ENCODE measurements at regions of chr2 and their contacts with region 1.

Region 1: GRCh38 chr2:222797261-222797660 is 63.6 kb upstream of the ACSL3 start:
- DNase-seq: no peak
- H3K4me3 Mint-ChIP-seq: no peak overlapping the region
- H3K27ac Mint-ChIP-seq: no peak overlapping the region
- H3K4me1 Mint-ChIP-seq: peaks cover 2% of the 10 kb centered on the region
- H3K27me3 Mint-ChIP-seq: peaks cover 4% of the 10 kb centered on the region

Region 2: DNA sequence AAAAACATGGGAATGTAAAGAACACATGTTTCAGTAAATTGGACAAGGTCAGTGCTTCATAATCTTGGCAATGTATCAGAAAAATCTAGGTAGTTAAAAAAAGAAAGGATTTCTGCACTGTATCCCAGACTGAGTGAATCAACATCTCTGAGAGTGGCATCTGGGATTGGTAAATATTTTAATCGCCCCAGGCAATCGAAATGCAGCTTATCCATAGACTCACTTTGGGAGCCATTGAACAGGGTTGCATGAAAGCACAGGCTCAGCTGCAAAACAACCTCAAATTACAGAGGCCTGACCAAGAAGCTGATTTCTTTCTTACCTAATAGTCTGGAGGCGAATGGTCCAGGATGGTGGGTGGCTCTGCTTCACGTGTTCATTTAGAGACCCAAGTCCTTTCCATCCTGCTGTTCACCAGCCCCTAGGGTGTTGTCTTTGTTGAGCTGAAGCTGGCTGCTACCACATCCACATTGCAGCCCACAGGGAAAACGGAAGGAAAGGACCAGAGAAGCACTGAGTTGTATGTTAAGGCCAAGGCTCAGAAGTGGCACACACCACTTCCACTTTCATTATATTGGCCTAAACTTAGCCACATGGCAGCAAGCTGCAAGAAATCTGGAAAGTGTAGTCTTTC is 66.8 kb before region 1 on chr2:
- intact Hi-C with region 1: no loop called
- DNase-seq: no peak
- H3K4me3 Mint-ChIP-seq: no peak overlapping the region
- H3K27ac Mint-ChIP-seq: no peak overlapping the region
- H3K4me1 Mint-ChIP-seq: peaks cover 11% of the 10 kb centered on the region
- H3K27me3 Mint-ChIP-seq: peaks cover 11% of the 10 kb centered on the region

Region 3: GRCh38 chr2:222844323-222844722 is 47.1 kb after region 1 on chr2:
- intact Hi-C with region 1: loop called (anchors 5 kb)
- DNase-seq: no peak
- H3K4me3 Mint-ChIP-seq: no peak overlapping the region
- H3K27ac Mint-ChIP-seq: no peak overlapping the region
- H3K4me1 Mint-ChIP-seq: peaks cover 22% of the 10 kb centered on the region
- H3K27me3 Mint-ChIP-seq: peaks cover 1% of the 10 kb centered on the region

Region 4: GRCh38 chr2:222860740-222861410 is 63.6 kb after region 1 on chr2 and contains the start of gene ACSL3:
- intact Hi-C with region 1: loop called (anchors 5 kb)
- DNase-seq: peak; percentile 93
- H3K4me3 Mint-ChIP-seq: peak within 1 kb of the TSS; percentile 76
- H3K27ac Mint-ChIP-seq: peak within 1 kb of the TSS; percentile 86
- H3K4me1 Mint-ChIP-seq: peaks cover 9% of the 10 kb centered on the region
- H3K27me3 Mint-ChIP-seq: peaks cover 11% of the 10 kb centered on the region
- total RNA-seq, gene ACSL3: 72.5 and 74.0 TPM in 2 replicates

Region 5: GRCh38 chr2:222903234-222904220 is 106.3 kb after region 1 on chr2:
- intact Hi-C with region 1: loop called (anchors 1 kb)
- DNase-seq: no peak
- H3K4me3 Mint-ChIP-seq: no peak overlapping the region
- H3K27ac Mint-ChIP-seq: no peak overlapping the region
- H3K4me1 Mint-ChIP-seq: peaks cover 26% of the 10 kb centered on the region
- H3K27me3 Mint-ChIP-seq: no peaks in the 10 kb centered on the region

Measured in activated T-helper 2 cell treated with anti-CD3 and anti-CD28 coated beads, Interferon-gamma antibody, Interleukin-2, Interleukin-4, amounts not matched to agents 10 μg/mL and 5 μg/mL and 100 μg/mL, durations not matched to agents 14 hours and 24 hours and 36 hours (primary cell).